ENCODE measurements at regions of chr2 and their contacts with region 1.

Region 1: DNA sequence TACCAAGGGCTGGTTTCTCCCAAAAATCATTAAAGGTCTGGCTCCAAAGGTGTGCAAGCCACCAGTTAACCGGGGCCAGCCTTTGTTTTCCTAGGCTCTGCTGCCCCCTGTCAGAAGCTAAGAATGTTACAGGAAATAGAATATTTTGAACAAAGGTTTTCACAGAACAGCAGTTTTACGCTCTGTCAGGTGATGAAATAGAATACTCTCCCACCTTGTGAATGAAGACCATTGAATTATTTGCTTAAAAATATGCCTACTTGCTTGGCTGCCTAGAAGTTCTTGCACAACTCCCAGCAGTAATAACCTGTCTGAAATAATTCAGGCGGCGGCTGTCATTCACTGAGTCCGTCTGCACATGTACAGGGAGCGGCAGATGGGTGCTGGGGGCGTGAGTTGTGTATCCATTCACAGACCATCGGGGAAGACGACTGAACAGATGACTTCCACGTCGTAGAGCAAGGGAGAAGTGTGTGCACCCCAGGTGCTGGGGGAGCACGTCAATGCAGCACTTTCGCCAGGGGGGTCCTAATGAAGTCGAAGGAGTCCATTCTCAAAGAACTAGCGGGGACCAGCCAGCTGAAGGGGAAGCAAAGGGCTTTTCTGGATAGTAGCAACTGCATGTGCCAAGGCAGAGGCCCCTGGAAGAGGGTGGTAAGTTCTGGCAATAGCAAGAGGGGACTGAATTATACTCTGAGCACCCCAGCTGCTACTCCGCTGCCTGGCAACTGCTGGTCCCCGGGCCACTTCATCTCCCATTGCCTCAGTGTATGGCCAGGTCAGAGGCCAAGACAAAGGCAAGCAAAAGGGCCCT is 56.1 kb downstream of the SF3B1 start:
- DNase-seq: peak in 1 of 3 donors; percentile 61
- ATAC-seq: peak; percentile 92 to 98 (median 95)
- H3K4me3 ChIP-seq: no peak overlapping the region
- H3K27ac ChIP-seq: no peak overlapping the region
- H3K4me1 ChIP-seq: no peaks in the 10 kb centered on the region
- H3K27me3 ChIP-seq: no peaks in the 10 kb centered on the region
- CTCF ChIP-seq: peak; percentile 70 to 84 (median 72)
- POLR2A ChIP-seq: no peak

Region 2: DNA sequence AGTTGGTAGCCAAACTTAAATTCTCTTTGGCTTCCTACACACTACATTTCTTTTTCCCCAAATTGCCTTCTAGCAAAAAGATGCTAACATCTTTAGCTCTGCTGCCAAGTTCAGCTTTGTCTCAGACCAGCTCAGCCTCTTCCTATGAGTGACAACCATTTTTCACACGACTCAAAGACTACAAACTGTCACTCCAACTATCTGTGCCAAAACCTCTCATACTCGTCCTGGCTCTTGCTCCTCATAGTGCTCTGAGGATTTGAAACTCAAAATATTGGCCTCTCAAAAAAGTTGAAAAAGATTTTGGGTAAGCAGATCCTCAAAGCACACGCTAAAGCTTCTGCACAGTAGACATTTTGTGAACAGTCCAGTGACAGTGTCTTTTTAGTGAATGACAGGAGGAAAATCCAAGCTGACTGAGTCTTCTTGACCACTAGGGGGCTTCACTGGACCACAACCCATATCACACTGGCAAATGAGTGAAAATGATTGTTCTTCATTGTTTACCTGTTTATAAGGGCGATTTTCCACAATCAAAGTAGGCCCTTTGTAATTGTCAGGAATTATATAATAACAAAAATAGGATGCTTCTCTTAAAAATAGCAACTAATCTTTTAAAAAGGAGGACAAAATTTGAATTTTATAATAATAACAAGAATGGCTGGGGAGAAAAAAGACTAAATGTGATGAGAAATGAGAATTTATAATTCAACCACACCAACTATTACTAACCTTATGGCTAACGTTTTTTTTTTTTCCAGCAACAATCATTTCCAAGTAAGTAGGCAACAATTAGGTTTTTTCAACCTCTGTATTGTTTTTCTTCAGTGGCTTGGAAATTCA is 366.7 kb before region 1 on chr2:
- intact Hi-C with region 1: loop called in 1 of 2 experiments (anchors 10 kb)
- DNase-seq: no peak
- ATAC-seq: peak; percentile 94 to 95 (median 94)
- H3K4me3 ChIP-seq: no peak overlapping the region
- H3K27ac ChIP-seq: peak overlapping the region in 1 of 3 donors; percentile 20
- H3K4me1 ChIP-seq: peaks cover 0 to 1% (median 0%) of the 10 kb centered on the region in 4 donors
- H3K27me3 ChIP-seq: no peaks in the 10 kb centered on the region
- CTCF ChIP-seq: peak; percentile 72 to 85 (median 80)
- POLR2A ChIP-seq: no peak

Region 3: DNA sequence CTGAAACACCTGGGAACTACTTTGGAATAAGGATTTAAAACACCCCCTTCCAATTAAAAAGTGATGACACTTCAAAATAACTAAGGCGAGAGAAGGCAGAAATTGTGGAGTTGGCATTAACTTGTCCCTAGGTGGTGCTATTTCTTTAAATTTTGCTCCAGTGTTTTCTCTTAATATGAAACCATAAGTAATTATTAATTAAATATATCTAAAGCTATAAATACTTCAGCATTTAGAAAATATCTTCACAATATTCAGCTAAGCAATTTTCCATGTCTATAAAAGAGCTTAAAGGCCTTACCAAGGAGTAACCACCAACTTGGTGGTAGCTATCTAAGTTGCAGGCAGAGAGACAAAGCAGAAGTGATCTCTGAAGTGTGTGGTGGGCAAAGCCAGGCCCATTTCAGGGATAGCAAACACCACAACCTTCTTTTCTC is 265.4 kb before region 1 on chr2:
- intact Hi-C with region 1: loop called in 1 of 2 experiments (anchors 5 kb)
- DNase-seq: no peak
- ATAC-seq: peak; percentile 28 to 54 (median 44)
- H3K4me3 ChIP-seq: no peak overlapping the region
- H3K27ac ChIP-seq: no peak overlapping the region
- H3K4me1 ChIP-seq: peaks cover 0 to 12% (median 6%) of the 10 kb centered on the region in 4 donors
- H3K27me3 ChIP-seq: no peaks in the 10 kb centered on the region
- CTCF ChIP-seq: peak; percentile 58 to 70 (median 68)
- POLR2A ChIP-seq: no peak

Region 4: DNA sequence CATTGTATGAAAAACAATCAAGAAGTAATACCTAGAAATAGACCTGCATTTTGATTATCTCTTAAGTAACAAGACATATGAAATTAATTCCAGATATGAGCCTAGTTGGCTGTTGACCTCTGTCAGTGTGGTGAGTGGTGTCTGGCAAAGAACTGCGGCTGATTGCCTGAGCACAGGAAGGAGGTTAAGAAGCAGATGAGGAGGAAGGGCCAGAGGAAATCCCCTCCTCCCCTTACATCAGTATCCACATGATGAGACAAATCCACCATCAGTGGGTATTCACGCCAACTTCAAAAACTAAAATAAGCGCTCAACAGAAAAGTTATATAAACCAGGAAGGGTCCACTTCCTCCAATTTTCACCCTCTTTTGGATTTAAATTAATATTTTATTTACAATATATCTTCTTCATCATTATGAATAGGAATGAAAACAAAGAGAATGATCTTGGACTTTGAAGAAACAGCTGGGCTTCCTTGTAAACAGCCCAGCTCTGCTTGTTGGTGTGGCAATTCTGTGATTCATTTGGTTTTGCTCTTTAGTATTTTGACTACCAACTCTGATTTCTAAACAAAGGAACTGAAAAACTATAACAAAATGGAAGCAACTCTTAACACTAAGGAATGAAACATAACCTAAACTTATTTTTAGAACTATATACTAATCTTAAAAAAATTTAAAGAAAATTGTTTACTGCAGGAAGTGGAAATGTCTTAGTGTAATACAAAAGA is 269.4 kb after region 1 on chr2:
- intact Hi-C with region 1: no loop called
- DNase-seq: no peak
- ATAC-seq: no peak
- H3K4me3 ChIP-seq: no peak overlapping the region
- H3K27ac ChIP-seq: no peak overlapping the region
- H3K4me1 ChIP-seq: no peaks in the 10 kb centered on the region
- H3K27me3 ChIP-seq: no peaks in the 10 kb centered on the region
- CTCF ChIP-seq: no peak
- POLR2A ChIP-seq: no peak

Region 5: GRCh38 chr2:198016243-198016642 is 637.5 kb after region 1 on chr2:
- intact Hi-C with region 1: no loop called
- DNase-seq: no peak
- ATAC-seq: no peak
- H3K4me3 ChIP-seq: no peak overlapping the region
- H3K27ac ChIP-seq: no peak overlapping the region
- H3K4me1 ChIP-seq: no peaks in the 10 kb centered on the region
- H3K27me3 ChIP-seq: no peaks in the 10 kb centered on the region
- CTCF ChIP-seq: no peak
- POLR2A ChIP-seq: no peak

Measured in right lobe of liver (tissue), 6 donors.